ENCODE measurements at regions of chr11 and their contacts with region 1.

Region 1: DNA sequence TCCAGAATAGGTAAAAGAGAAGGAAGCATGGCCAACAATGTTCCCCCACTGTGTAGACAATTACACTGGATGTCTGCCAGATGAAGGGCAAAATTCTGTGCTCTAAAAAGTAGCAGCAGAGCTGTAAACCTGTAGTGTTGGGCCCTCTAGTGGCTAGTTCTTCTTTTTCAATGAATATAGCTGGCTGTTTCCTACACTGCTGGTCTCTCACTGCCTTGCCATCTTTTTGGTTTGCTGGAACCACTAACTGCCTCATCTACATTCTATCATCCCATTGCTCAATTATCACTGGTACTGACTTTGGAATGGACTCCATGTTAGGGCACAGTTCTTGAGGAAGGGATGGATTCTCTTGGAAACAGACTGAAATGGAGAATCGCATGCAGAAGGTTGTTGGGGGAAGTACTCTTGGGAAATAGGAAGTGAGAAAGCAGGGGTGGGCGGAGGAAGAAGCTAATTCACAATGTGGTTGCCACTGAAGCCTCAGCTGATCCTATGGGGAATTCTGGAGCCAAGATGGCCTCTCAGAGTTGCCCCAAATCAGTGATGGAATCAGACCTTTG is 17.9 kb downstream of the KCNE3 start:
- DNase-seq: peak in 1 of 2 donors; percentile 28
- ATAC-seq: peak; percentile 71 to 78
- H3K4me3 ChIP-seq: no peak overlapping the region
- H3K27ac ChIP-seq: no peak overlapping the region
- H3K4me1 ChIP-seq: peaks cover 8 to 9% of the 10 kb centered on the region in 2 donors
- H3K27me3 ChIP-seq: no peaks in the 10 kb centered on the region
- CTCF ChIP-seq: peak; percentile 52 to 79 (median 74)
- POLR2A ChIP-seq: no peak

Region 2: DNA sequence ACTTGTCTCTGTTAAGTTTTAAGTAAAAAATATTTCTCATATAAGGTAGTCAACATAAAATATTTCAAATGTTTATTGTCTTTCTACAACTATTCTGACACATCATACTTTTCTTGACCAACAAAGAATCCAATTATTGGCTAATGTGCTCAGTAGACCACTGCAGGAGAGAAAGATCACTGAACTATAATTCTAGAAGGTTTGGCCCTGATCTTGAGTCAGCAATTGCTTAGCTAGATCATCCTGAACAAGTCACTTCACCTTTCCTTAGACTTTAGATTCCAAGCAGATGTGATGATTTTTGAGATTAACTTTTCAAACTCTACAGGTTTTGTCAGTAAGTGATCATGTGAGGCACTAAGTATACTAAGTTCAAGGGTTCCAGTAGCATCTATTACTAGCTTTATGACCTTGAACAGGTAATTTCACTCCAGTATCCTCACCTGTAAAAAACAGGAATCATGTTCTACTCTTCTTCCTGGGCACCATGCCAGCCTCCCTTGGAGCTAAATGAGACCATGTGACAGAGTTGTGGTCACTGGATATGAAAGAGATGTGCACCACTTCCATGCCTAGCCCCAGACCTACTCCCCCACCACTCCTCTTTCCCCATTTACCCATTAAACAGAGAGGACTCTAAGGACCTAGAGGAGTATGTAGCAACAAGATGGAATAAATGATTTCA is 68.6 kb before region 1 on chr11:
- in situ Hi-C with region 1: loop called in 2 of 4 experiments (anchors 5 kb)
- intact Hi-C with region 1: no loop called
- DNase-seq: no peak
- ATAC-seq: no peak
- H3K4me3 ChIP-seq: no peak overlapping the region
- H3K27ac ChIP-seq: no peak overlapping the region
- H3K4me1 ChIP-seq: no peaks in the 10 kb centered on the region
- H3K27me3 ChIP-seq: no peaks in the 10 kb centered on the region
- CTCF ChIP-seq: no peak
- POLR2A ChIP-seq: no peak

Region 3: DNA sequence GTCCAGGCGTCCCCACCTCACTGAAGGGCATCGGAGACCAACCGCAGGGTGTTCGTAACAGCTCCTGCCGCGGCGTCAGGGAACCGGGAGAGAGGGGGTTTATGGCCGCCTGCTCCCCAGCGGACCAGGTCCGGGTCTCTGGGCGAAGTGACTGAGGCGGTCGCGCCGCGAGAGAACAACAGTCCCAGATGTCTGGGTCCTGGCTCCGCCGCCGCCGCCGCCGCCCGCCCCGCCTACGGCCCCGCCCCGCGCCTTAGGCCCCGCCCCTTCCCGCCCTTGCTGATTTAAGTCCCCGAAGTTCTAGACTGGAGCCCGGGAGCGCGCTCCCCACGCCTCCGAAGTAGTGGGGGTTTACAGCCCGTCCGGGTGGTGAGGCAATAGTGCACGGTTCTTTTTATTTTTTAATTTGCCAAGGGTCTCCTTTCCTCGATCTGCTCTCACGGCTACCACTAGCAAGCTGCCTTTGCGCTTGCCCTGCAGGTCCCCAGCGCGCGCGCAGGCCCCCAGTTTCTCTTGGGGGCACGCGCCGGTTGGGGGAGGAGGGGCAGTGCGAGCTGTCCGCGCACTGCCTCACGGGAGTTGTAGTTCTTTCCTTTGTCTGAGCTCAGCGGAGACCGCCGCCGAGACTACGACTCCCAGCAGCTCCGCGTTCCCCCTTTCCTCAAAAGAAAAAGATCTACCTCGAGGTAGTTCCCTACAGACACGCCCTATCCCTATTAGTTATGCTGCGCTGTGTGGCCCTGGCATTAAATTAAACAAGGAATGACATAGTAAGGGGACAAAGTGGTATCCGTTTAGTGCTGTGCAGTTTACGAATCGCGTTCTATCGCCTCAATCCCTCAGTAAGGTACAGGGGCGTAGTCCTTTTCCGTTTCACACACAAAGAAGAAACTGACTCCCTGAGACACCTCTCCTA is 50.9 kb before region 1 on chr11 and contains the start of gene PGM2L1:
- in situ Hi-C with region 1: loop called in 2 of 4 experiments (anchors 5 to 10 kb)
- intact Hi-C with region 1: no loop called
- DNase-seq: peak; percentile 91 to 93
- ATAC-seq: peak; percentile 97
- H3K4me3 ChIP-seq: peak within 1 kb of the TSS; percentile 88 to 99 (median 92)
- H3K27ac ChIP-seq: peak within 1 kb of the TSS; percentile 89 to 99 (median 94)
- H3K4me1 ChIP-seq: peaks cover 7% of the 10 kb centered on the region in 2 donors
- H3K27me3 ChIP-seq: no peaks in the 10 kb centered on the region
- CTCF ChIP-seq: no peak
- POLR2A ChIP-seq: peak; percentile 64 to 87
- total RNA-seq, gene PGM2L1: 3.7 to 9.7 (median 7.9) TPM

Region 4: GRCh38 chr11:74570266-74571061 is 121.0 kb after region 1 on chr11:
- in situ Hi-C with region 1: loop called in 1 of 4 experiments (anchors 10 kb)
- intact Hi-C with region 1: loop called (anchors 1 kb)
- DNase-seq: no peak
- ATAC-seq: peak in 1 of 2 donors; percentile 53
- H3K4me3 ChIP-seq: no peak overlapping the region
- H3K27ac ChIP-seq: no peak overlapping the region
- H3K4me1 ChIP-seq: no peaks in the 10 kb centered on the region
- H3K27me3 ChIP-seq: no peaks in the 10 kb centered on the region
- CTCF ChIP-seq: peak; percentile 29 to 59 (median 45)
- POLR2A ChIP-seq: no peak

Region 5: DNA sequence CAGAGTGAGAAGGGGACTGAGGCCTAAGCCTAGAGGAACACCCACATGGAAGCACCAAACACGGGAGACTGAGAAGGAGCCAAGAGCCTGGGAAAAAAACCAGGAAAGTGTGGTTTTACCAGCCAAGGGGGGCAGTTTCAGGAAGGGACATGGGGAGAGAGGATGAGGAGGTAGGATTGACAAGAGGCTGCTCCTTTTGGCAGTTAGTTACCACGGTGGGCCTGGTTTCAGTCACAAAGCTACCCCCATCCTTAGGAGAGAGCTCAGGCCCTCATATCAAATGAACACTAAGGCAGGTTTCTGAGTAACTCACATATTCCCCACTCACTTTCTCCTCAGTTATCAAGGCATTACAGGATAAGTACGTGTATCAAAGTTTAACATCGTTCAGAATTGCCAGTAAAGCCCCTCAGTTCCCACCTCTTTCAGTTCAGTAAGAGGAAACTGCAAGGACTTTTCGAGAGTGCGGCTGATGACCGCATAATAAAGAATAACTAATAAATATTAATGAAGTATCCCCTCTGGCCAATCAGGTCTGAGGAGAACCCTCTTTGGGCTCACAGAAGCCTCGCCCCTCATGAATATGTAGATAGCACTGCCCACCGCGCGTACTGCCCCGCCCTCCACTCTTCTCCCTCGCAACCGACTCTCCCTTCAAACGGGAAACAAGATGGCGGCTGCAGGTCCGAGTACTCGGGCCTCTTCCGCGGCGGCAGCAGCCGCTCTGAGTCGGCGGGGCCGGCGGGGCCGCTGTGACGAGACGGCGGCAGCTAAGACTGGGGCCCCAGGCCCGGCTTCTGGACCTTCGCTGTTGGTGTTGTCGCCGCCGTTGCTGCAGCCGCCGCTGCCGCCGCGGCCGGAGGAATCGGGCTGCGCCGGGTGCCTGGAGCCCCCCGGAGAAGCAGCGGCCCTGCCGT is 299.0 kb after region 1 on chr11 and contains the start of gene RNF169:
- in situ Hi-C with region 1: loop called in 2 of 4 experiments (anchors 25 kb)
- intact Hi-C with region 1: no loop called
- DNase-seq: peak; percentile 93 to 94
- ATAC-seq: peak; percentile 99
- H3K4me3 ChIP-seq: peak within 1 kb of the TSS; percentile 65 to 84 (median 72)
- H3K27ac ChIP-seq: peak within 1 kb of the TSS; percentile 82 to 93 (median 87)
- H3K4me1 ChIP-seq: peaks cover 14 to 23% of the 10 kb centered on the region in 2 donors
- H3K27me3 ChIP-seq: no peaks in the 10 kb centered on the region
- CTCF ChIP-seq: no peak
- POLR2A ChIP-seq: peak; percentile 51 to 69
- total RNA-seq, gene RNF169: 17.1 to 25.2 (median 21.0) TPM

Measured in gastrocnemius medialis (tissue), 4 donors.